ENCODE measurements at regions of chr10 and their contacts with region 1.

Region 1: DNA sequence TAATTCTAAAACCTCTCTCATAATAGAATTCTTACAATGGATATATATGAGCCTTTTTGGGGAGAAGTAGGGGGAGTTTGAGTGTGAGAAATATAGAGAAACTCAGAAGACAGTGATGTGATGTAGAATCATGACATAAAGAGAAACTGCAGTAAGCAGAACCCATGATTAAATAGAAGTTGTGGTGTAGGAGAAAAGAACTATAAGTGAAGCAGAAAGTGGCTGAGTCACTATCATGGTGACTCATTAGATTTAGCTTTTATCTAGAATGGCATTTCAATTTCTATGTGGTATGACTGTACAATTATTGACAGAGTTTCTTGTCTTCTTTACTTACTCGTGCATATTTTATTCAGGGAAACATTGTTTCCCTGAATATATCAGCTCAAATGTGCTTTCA is 1530.9 kb upstream of the LRRTM3 start:
- DNase-seq: no peak
- ATAC-seq: no peak
- H3K4me3 ChIP-seq: no peak overlapping the region
- H3K4me3 Mint-ChIP-seq: no peak overlapping the region
- H3K27ac ChIP-seq: no peak overlapping the region
- H3K27ac Mint-ChIP-seq: no peak overlapping the region
- H3K4me1 ChIP-seq: no peaks in the 10 kb centered on the region
- H3K4me1 Mint-ChIP-seq: no peaks in the 10 kb centered on the region
- H3K27me3 ChIP-seq: no peaks in the 10 kb centered on the region
- H3K27me3 Mint-ChIP-seq: no peaks in the 10 kb centered on the region
- CTCF ChIP-seq: no peak

Region 2: DNA sequence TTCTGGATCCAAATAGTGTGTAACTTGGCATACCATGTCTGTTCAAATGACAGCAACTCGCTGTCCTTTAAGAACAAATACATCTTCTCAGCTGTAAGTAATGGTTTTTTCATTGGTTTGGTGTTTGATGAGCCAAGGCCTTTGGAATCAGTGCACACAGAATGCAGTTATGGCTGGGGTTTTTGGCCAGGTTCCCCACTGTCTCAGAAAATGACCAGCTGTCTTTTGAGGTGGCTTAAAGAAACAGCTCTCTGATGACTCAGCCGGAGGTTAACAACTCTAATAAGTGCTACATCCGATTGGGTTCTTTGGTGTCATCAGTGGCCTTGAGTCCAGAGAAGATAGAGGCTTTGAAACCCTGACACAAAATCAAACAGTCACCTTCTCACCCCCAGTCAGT is 1185.3 kb before region 1 on chr10:
- CTCF ChIA-PET with region 1: no interaction called
- POLR2A ChIA-PET with region 1: no interaction called
- intact Hi-C with region 1: no loop called
- DNase-seq: no peak
- ATAC-seq: no peak
- H3K4me3 ChIP-seq: no peak overlapping the region
- H3K4me3 Mint-ChIP-seq: no peak overlapping the region
- H3K27ac ChIP-seq: no peak overlapping the region
- H3K27ac Mint-ChIP-seq: no peak overlapping the region
- H3K4me1 ChIP-seq: no peaks in the 10 kb centered on the region
- H3K4me1 Mint-ChIP-seq: no peaks in the 10 kb centered on the region
- H3K27me3 ChIP-seq: no peaks in the 10 kb centered on the region
- H3K27me3 Mint-ChIP-seq: no peaks in the 10 kb centered on the region
- CTCF ChIP-seq: no peak

Region 3: GRCh38 chr10:65377687-65378086 is 17.2 kb before region 1 on chr10:
- CTCF ChIA-PET with region 1: no interaction called
- POLR2A ChIA-PET with region 1: no interaction called
- intact Hi-C with region 1: loop called in 1 of 2 experiments (anchors 1 kb)
- DNase-seq: no peak
- ATAC-seq: no peak
- H3K4me3 ChIP-seq: no peak overlapping the region
- H3K4me3 Mint-ChIP-seq: no peak overlapping the region
- H3K27ac ChIP-seq: no peak overlapping the region
- H3K27ac Mint-ChIP-seq: no peak overlapping the region
- H3K4me1 ChIP-seq: no peaks in the 10 kb centered on the region
- H3K4me1 Mint-ChIP-seq: no peaks in the 10 kb centered on the region
- H3K27me3 ChIP-seq: no peaks in the 10 kb centered on the region
- H3K27me3 Mint-ChIP-seq: no peaks in the 10 kb centered on the region
- CTCF ChIP-seq: no peak

Region 4: DNA sequence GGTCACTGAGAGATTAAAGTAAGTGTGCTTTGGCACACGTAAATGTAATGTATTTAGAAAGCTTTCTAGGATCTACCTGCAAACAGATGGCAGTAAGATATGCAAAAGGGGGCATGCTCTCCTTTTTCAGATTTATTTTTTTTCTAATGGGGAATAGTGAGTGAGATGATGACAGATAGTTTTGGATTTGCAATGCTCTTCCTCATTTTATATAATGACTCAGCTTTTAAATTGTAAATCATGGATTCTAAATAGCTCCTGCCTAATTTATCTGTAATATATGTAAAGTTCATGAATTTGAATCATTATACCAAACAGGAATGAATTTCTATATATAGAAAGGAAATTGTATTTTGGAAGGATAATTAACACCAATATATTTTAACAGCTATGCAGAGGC is 569.3 kb after region 1 on chr10:
- CTCF ChIA-PET with region 1: no interaction called
- POLR2A ChIA-PET with region 1: no interaction called
- intact Hi-C with region 1: no loop called
- DNase-seq: no peak
- ATAC-seq: no peak
- H3K4me3 ChIP-seq: no peak overlapping the region
- H3K4me3 Mint-ChIP-seq: no peak overlapping the region
- H3K27ac ChIP-seq: no peak overlapping the region
- H3K27ac Mint-ChIP-seq: no peak overlapping the region
- H3K4me1 ChIP-seq: no peaks in the 10 kb centered on the region
- H3K4me1 Mint-ChIP-seq: no peaks in the 10 kb centered on the region
- H3K27me3 ChIP-seq: no peaks in the 10 kb centered on the region
- H3K27me3 Mint-ChIP-seq: no peaks in the 10 kb centered on the region
- CTCF ChIP-seq: no peak

Measured in CD8-positive, alpha-beta T cell (primary cell).